Activated CD4-positive, alpha-beta T cell treated with anti-CD3 and anti-CD28 coated beads, Interleukin-2, amount 10 ng/mL, durations not matched to agents 24 days and 14 days (primary cell): ENCODE measurements at regions of chr19 and their contacts with region 1.

Region 1: GRCh38 chr19:32971715-32972540 is at the starts of genes CEP89 and FAAP24:
- DNase-seq: peak; percentile 100
- H3K4me3 Mint-ChIP-seq: peak within 1 kb of the TSS; percentile 100
- H3K27ac Mint-ChIP-seq: peak within 1 kb of the TSS; percentile 95
- H3K4me1 Mint-ChIP-seq: peaks cover 19% of the 10 kb centered on the region
- H3K27me3 Mint-ChIP-seq: no peaks in the 10 kb centered on the region
- total RNA-seq, gene CEP89: 16.9 and 17.6 TPM in 2 replicates
- total RNA-seq, gene FAAP24: 10.0 and 10.1 TPM in 2 replicates

Region 2: DNA sequence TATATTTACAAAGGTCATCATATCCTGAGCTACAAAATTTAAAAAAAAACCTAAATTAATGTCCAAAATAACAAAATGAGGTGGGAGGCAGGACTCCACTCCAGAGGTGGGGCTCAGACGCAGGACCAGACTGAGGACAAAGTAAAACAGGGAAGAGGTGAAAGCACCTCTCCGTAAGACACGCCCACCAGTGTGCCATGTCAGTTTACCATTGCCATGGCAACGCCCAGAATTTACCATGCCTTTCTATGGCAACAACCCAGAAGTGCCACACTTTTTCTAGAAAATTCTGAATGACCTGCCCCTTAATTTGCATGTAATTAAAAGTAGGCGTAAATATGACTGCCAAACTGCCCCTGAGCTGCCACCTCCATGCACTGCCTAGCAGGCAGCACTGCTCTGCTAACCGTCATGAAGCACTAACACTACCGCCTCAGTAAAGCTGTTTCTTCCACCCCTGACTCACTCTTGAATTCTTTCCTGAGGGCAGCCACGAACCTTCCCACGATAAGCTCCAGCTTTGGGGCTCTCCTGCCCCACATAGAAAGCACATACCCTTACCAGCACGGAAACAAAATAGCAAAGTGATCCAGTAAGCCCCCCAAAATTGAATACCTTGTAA is 413.2 kb before region 1 on chr19:
- intact Hi-C with region 1: no loop called
- DNase-seq: no peak
- H3K4me3 Mint-ChIP-seq: no peak overlapping the region
- H3K27ac Mint-ChIP-seq: no peak overlapping the region
- H3K4me1 Mint-ChIP-seq: peaks cover 2% of the 10 kb centered on the region
- H3K27me3 Mint-ChIP-seq: peaks cover 3% of the 10 kb centered on the region

Region 3: DNA sequence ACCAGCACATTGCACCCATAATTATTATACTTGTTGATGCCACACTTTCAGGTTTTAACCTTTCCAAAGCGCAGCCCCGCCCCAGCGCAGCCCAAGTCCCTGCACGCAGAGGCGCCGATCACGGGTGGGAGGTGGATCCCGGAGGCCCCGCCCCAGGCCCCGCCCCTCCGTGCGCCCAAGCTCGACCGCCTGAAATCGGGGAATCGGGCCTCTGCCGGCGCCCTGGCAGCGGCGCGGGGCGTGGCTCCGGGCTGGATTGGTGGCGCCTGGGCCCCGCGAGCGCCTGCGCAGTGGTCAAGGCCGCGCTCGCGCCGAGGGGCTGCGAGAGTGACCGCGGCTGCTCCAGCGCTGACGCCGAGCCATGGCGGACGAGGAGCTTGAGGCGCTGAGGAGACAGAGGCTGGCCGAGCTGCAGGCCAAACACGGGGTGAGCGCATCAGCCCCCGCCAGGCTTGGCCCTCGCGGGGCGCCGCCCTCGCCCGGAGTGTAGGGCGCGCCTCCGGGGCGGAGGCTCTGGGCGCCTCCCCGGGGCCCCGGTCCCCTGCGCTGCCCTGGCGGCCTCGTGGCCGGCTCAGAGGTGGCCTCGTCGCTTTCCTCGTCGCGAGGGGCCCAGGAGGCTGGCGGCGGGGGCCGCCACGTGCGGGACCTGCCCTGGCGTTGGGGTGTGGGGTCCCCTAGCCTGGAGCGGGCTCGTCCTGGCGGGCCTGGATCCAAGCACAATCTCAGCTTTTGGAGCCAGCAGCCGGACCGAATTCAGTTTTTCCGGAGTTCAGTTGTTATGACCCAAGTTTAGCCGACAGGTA is 390.8 kb before region 1 on chr19 and contains the start of gene PDCD5:
- intact Hi-C with region 1: loop called (anchors 5 kb)
- DNase-seq: peak; percentile 98
- H3K4me3 Mint-ChIP-seq: peak within 1 kb of the TSS; percentile 93
- H3K27ac Mint-ChIP-seq: peak within 1 kb of the TSS; percentile 90
- H3K4me1 Mint-ChIP-seq: peaks cover 24% of the 10 kb centered on the region
- H3K27me3 Mint-ChIP-seq: peaks cover 8% of the 10 kb centered on the region
- total RNA-seq, gene PDCD5: 213 and 231 TPM in 2 replicates

Region 4: GRCh38 chr19:32691291-32691951 is 280.5 kb before region 1 on chr19 and contains the start of gene NUDT19:
- intact Hi-C with region 1: loop called (anchors 5 kb)
- DNase-seq: peak; percentile 94
- H3K4me3 Mint-ChIP-seq: peak within 1 kb of the TSS; percentile 94
- H3K27ac Mint-ChIP-seq: peak within 1 kb of the TSS; percentile 97
- H3K4me1 Mint-ChIP-seq: peaks cover 44% of the 10 kb centered on the region
- H3K27me3 Mint-ChIP-seq: no peaks in the 10 kb centered on the region
- total RNA-seq, gene NUDT19: 25.3 and 25.9 TPM in 2 replicates

Region 5: GRCh38 chr19:33080761-33081681 is 109.1 kb after region 1 on chr19 and contains the start of gene GPATCH1:
- intact Hi-C with region 1: loop called (anchors 1 kb)
- DNase-seq: peak; percentile 97
- H3K4me3 Mint-ChIP-seq: peak within 1 kb of the TSS; percentile 98
- H3K27ac Mint-ChIP-seq: peak within 1 kb of the TSS; percentile 97
- H3K4me1 Mint-ChIP-seq: peaks cover 25% of the 10 kb centered on the region
- H3K27me3 Mint-ChIP-seq: no peaks in the 10 kb centered on the region
- total RNA-seq, gene GPATCH1: 11.7 and 12.9 TPM in 2 replicates

Region 6: DNA sequence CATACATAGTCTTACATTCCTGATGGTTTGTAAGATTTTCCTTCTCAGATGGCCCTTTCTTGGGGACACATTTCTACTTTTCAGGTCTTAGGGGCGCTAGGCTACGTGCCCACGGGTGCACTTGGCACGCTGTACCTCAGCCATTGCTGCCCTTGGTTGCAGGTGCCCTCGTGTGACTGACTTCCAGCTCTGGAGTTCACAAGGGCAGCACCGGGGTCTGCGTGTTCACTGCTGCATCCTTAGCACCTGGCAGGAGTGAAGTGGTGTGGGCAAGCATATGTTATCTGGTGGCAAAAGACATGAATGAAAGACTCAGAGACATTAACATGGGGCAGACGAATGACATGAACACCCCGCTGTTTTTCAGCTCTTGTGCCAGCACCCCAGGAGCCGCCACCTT is 146.7 kb after region 1 on chr19:
- intact Hi-C with region 1: loop called (anchors 1 kb)
- DNase-seq: no peak
- H3K4me3 Mint-ChIP-seq: no peak overlapping the region
- H3K27ac Mint-ChIP-seq: no peak overlapping the region
- H3K4me1 Mint-ChIP-seq: no peaks in the 10 kb centered on the region
- H3K27me3 Mint-ChIP-seq: no peaks in the 10 kb centered on the region

Region 7: DNA sequence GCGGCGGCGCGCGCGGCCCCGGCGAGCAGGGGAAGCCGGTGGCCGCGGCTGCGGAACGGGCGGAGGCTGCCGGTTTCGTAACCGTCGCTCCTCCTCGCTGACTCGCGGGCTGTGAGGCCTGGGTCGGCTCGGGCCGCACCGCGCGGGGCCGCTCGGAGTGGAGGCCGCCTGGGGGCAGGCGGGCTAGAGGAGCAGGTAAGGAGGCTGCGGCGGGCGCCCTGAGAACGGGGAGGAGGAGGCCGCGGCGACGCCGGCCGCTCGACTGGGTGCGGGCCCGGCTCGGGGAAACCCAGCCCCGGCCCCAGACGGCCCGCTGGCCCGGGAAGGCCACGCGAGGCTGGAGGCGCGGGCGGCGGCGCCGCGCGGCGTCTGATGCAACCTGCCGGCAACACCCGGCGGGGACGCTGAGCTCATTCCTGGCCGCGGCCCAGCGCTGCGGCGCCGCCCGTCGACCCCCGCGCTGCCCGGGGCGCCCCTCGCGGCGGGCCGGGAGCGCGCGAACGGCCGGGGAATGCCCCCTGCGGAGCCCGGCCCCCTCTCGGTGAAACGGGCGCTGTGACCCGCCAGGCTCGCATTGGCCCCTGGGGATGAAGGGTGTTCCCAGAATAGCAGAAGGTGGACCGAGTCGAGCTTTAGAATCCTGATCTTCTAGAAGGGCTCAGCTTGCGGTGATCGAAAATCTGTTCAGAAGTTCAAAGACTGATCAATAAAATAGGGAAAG is 401.9 kb after region 1 on chr19 and contains the start of gene CEBPG:
- intact Hi-C with region 1: loop called (anchors 10 kb)
- DNase-seq: peak; percentile 88
- H3K4me3 Mint-ChIP-seq: peak within 1 kb of the TSS; percentile 94
- H3K27ac Mint-ChIP-seq: peak within 1 kb of the TSS; percentile 80
- H3K4me1 Mint-ChIP-seq: peaks cover 39% of the 10 kb centered on the region
- H3K27me3 Mint-ChIP-seq: no peaks in the 10 kb centered on the region
- total RNA-seq, gene CEBPG: 29.7 and 29.8 TPM in 2 replicates